A549 (cell line): ENCODE measurements at regions of chr2 and their contacts with region 1.

Region 1: DNA sequence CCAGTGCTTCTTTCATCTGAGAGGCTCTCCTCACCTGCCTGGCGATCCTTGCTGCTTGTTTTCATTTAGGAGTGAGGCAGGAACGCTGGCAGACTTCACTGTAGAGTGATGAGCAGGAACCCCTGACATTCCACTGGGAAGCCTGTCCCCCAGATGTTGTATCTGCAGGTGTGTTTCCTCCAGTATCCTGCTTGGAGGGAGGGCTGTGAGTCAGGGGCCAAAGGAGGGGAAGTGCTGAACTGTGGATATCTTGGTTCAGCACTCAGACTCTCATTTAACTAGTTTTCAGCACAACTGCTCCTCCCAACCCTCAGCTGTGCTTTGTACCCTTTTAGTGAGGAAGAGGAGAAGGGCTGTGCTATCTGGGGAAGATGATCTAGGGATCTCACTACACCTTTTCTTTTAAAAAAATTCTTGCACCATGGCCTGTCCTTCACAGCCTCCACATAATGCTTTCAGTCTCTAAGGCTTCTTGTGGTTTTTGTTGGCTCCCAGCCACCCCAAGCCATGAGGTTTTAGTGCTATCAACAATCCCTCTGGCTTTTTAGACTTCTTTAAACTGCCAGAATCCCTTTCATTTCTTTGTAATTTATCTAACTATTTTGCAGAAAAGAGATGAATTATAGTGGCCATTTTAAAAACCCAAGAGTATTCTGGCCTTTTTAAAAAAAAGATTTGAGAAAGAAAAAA is 11.2 kb downstream of the ANKAR start:
- DNase-seq: no peak
- ATAC-seq: no peak
- H3K4me3 ChIP-seq: no peak overlapping the region
- H3K27ac ChIP-seq: no peak overlapping the region
- H3K4me1 ChIP-seq: no peaks in the 10 kb centered on the region
- CTCF ChIP-seq: no peak
- EP300 ChIP-seq: no peak
- POLR2A ChIP-seq: no peak
- RAD21 ChIP-seq: no peak

Region 2: DNA sequence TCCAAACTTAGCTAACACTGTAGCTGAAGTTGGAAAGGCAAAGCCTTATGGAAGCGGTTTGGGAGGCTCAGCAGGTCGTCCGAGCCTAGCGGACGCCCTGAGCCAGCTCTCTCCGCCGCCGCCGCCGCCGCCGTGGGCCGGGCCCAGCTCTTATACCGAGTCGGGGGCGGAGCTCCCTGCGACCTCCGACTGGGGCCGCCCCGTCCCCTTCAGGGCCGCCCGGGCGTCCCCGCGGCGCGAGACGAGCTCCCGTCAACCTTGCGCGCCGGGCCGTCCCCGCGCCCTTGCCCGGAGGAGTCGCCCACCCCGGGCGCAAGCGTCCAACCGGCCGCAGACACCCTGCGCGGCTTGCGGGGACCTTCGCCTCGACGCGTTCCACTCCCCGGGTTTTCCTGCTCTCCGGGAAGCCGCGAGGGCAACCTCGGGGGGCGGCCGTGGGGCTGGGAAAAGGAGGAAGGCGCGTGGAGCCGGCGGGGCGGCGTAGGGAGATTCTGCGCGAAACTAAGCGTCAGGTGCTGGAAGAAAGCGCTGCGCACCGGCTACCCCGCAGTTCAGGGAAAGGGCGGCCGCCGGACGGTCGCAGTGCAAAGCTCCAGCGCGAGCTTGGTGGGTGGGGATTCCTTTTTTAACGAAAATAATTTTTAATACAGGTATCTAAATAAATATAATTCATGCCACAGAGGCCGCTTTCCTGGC is 104.9 kb before region 1 on chr2 and contains the start of gene SLC40A1:
- CTCF ChIA-PET with region 1: no interaction called
- POLR2A ChIA-PET with region 1: no interaction called
- DNase-seq: peak; percentile 51 to 80
- ATAC-seq: peak; percentile 96 to 97
- H3K4me3 ChIP-seq: peak within 1 kb of the TSS; percentile 63
- H3K27ac ChIP-seq: peak within 1 kb of the TSS; percentile 77 to 96
- H3K4me1 ChIP-seq: peaks cover 41% of the 10 kb centered on the region
- CTCF ChIP-seq: no peak
- EP300 ChIP-seq: no peak
- POLR2A ChIP-seq: peak; percentile 87
- RAD21 ChIP-seq: peak in 1 of 2 experiments; percentile 15; a peak in 2 of 5 replicates
- polyA plus RNA-seq, gene SLC40A1: 12.3 and 25.0 TPM in 2 replicates

Region 3: GRCh38 chr2:189698020-189698887 is 12.6 kb after region 1 on chr2:
- CTCF ChIA-PET with region 1: interaction called, 11 read pairs
- POLR2A ChIA-PET with region 1: no interaction called
- DNase-seq: peak; percentile 10 to 47
- ATAC-seq: peak; percentile 77 to 80; a peak in 5 of 6 replicates
- H3K4me3 ChIP-seq: no peak overlapping the region
- H3K27ac ChIP-seq: no peak overlapping the region
- H3K4me1 ChIP-seq: no peaks in the 10 kb centered on the region
- CTCF ChIP-seq: peak; percentile 80
- EP300 ChIP-seq: no peak
- POLR2A ChIP-seq: no peak
- RAD21 ChIP-seq: peak; percentile 24 to 35; a peak in 3 of 5 replicates